ENCODE measurements at regions of chr5 and their contacts with region 1.

Region 1: DNA sequence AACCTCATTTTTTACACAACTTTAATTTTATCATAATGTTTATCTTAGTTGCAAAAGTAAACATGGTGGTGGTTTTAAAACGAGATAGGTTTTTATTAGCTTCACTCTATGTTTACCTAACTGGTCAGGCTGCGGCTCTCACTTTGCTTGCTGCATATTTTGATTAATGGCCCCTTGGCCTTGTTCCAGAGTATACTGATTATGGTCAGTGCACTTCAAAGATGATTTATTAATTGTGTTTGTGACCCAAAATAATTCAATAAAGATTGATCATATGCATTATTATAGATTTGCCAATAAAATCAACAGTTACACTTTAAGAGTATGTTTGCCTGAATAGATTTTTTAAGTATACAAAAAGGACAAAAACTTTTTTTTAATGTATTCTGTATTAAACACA is 188.0 kb downstream of the XRCC4 start:
- DNase-seq: peak; percentile 88
- ATAC-seq: peak; percentile 99
- H3K4me3 ChIP-seq: no peak overlapping the region
- H3K27ac ChIP-seq: no peak overlapping the region
- H3K4me1 ChIP-seq: peaks cover 11% of the 10 kb centered on the region; the same call in 1 of the 2 replicates
- H3K27me3 ChIP-seq: peaks cover 13% of the 10 kb centered on the region
- CTCF ChIP-seq: no peak

Region 2: DNA sequence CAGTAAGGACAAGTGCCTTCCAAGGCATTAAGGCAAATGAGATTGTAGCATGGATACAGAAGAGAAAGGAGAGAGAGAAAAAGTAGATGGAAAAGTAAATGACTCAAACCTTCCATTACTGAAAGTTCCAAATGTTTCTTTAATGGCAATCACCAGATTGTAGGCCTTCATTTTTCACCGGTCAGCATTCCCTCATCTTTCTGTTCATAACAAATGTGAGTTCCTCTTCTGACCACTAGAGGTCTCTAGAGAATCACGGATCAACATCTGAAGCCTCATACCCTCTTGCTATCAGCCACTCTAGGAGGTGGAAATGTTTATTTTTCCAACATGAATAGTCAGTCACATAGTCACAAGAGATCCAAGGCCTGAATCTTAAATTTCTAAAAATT is 913.6 kb before region 1 on chr5:
- CTCF ChIA-PET with region 1: no interaction called
- POLR2A ChIA-PET with region 1: no interaction called
- intact Hi-C with region 1: loop called (anchors 10 kb)
- DNase-seq: peak; percentile 85
- ATAC-seq: peak; percentile 81
- H3K4me3 ChIP-seq: no peak overlapping the region
- H3K27ac ChIP-seq: peak overlapping the region; percentile 90
- H3K4me1 ChIP-seq: peaks cover 17% of the 10 kb centered on the region
- H3K27me3 ChIP-seq: no peaks in the 10 kb centered on the region
- CTCF ChIP-seq: peak; percentile 89

Region 3: DNA sequence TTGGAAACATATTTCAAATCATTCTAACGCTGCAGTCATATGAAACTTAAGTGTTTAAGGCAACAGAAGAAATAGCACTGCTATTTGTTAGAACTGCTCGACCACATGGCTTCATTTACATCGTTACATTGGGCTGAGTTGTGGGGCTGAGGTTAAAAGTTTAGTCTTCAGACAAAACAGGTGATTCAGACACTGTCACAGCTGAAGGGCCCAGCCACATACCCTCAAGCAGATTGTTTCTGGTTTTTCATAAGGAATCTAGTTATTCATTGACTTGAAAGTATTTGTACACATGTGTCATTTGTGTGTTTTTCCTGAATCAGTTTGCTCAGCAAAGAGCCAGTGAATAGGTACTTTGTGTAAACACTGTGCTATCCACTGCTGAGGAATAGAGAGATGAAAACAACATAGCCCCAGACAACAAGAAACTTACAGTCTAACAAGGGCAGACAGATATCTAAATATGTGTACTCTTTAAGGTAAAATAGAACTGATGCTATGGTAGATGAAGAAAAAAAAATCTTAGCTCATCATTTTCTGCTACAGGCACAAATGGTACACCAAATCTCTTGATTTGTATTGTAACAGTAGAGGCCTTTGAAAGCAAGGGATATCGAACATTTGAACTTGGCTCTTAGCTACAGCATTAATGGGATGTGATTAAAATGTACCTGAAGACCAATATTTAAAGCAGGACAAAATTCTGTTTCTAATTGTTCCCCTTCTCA is 629.6 kb before region 1 on chr5:
- CTCF ChIA-PET with region 1: no interaction called
- POLR2A ChIA-PET with region 1: no interaction called
- intact Hi-C with region 1: loop called (anchors 5 kb)
- DNase-seq: peak; percentile 96
- ATAC-seq: peak; percentile 95
- H3K4me3 ChIP-seq: no peak overlapping the region
- H3K27ac ChIP-seq: peak overlapping the region; percentile 92
- H3K4me1 ChIP-seq: peaks cover 40% of the 10 kb centered on the region
- H3K27me3 ChIP-seq: no peaks in the 10 kb centered on the region
- CTCF ChIP-seq: no peak

Region 4: GRCh38 chr5:83095957-83096539 is 169.3 kb before region 1 on chr5:
- CTCF ChIA-PET with region 1: no interaction called
- POLR2A ChIA-PET with region 1: no interaction called
- intact Hi-C with region 1: loop called (anchors 5 kb)
- DNase-seq: peak; percentile 89
- ATAC-seq: peak; percentile 97
- H3K4me3 ChIP-seq: no peak overlapping the region
- H3K27ac ChIP-seq: peak overlapping the region; percentile 38; the same call in 1 of the 2 replicates
- H3K4me1 ChIP-seq: peaks cover 39% of the 10 kb centered on the region
- H3K27me3 ChIP-seq: no peaks in the 10 kb centered on the region
- CTCF ChIP-seq: no peak

Region 5: DNA sequence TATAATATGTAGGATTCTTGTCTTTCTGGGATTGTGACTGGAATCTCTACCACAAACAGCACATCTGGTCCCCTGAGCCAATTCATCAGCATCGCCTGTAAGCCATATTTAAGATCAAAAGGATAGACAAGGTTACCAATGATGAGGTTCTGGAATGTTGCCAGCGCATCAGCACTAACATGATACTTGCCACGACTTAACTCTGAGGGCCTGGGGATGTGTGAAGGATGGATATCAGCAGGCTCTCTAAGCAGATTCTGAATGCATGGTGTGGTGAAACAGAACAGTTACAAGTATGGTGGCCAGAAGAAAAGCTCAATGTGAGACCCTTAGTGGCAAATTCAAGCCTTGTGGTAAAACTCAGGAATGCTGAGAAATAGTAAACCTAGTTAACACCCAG is 45.0 kb before region 1 on chr5:
- CTCF ChIA-PET with region 1: no interaction called
- POLR2A ChIA-PET with region 1: no interaction called
- intact Hi-C with region 1: no loop called
- DNase-seq: no peak
- ATAC-seq: no peak
- H3K4me3 ChIP-seq: no peak overlapping the region
- H3K27ac ChIP-seq: no peak overlapping the region
- H3K4me1 ChIP-seq: no peaks in the 10 kb centered on the region
- H3K27me3 ChIP-seq: no peaks in the 10 kb centered on the region
- CTCF ChIP-seq: no peak

Region 6: GRCh38 chr5:83281658-83282057 is 16.3 kb after region 1 on chr5:
- CTCF ChIA-PET with region 1: no interaction called
- POLR2A ChIA-PET with region 1: no interaction called
- intact Hi-C with region 1: loop called (anchors 1 kb)
- DNase-seq: peak; percentile 94
- ATAC-seq: peak; percentile 94
- H3K4me3 ChIP-seq: no peak overlapping the region
- H3K27ac ChIP-seq: no peak overlapping the region
- H3K4me1 ChIP-seq: peaks cover 20% of the 10 kb centered on the region
- H3K27me3 ChIP-seq: no peaks in the 10 kb centered on the region
- CTCF ChIP-seq: no peak

Region 7: GRCh38 chr5:83312663-83313062 is 47.3 kb after region 1 on chr5:
- CTCF ChIA-PET with region 1: no interaction called
- POLR2A ChIA-PET with region 1: no interaction called
- intact Hi-C with region 1: no loop called
- DNase-seq: no peak
- ATAC-seq: no peak
- H3K4me3 ChIP-seq: no peak overlapping the region
- H3K27ac ChIP-seq: no peak overlapping the region
- H3K4me1 ChIP-seq: no peaks in the 10 kb centered on the region
- H3K27me3 ChIP-seq: no peaks in the 10 kb centered on the region
- CTCF ChIP-seq: no peak

Region 8: DNA sequence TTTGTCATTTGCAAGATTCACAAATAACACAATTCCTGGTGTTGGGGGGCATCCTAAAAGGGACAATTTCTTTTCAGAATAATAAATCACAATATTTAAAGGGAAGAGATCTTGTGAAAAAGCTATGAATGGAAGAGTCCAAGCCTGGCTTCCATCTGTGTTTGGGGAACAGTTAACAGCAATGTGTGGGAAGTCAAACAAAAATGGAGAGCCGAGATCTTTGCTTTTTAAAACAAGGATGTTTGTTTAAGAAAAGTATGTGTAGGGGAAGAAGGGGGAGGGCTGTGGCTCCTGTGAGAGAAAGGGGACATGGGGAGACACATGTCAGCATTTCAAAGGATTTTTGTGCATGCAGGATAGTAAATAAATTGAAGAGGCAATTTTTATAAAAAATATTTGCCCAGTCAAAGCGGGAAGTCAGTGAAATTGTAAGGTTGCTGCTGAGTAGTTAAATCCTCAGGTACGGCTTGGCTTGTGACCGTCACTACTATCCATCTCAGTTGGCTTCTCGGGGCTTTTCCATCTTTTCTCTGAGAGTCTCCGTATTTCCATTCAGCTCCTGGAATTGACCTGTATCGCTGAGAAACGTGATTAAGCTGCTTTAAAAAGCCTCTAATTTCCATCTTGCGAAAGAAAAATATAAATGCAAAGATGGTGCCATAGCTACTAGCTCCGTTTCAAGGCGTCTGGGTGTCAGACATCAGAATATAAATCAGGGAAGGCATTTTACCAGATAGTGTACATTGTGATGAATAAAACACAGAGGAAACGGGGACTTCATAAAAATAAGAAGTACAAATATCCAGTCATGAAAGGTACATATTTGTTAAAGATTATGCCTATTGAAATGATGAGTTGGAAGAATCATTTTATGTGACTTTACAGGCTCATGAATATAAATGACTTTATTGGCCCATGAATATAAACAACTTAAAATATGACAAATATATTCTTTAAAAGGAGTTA is 153.3 kb after region 1 on chr5:
- CTCF ChIA-PET with region 1: no interaction called
- POLR2A ChIA-PET with region 1: no interaction called
- intact Hi-C with region 1: loop called (anchors 5 kb)
- DNase-seq: peak; percentile 60
- ATAC-seq: peak; percentile 95
- H3K4me3 ChIP-seq: peak overlapping the region; percentile 66
- H3K27ac ChIP-seq: peak overlapping the region; percentile 39; the same call in 1 of the 2 replicates
- H3K4me1 ChIP-seq: peaks cover 11% of the 10 kb centered on the region; the same call in 1 of the 2 replicates
- H3K27me3 ChIP-seq: no peaks in the 10 kb centered on the region
- CTCF ChIP-seq: no peak